ENCODE measurements at regions of chr14 and their contacts with region 1.

Region 1: DNA sequence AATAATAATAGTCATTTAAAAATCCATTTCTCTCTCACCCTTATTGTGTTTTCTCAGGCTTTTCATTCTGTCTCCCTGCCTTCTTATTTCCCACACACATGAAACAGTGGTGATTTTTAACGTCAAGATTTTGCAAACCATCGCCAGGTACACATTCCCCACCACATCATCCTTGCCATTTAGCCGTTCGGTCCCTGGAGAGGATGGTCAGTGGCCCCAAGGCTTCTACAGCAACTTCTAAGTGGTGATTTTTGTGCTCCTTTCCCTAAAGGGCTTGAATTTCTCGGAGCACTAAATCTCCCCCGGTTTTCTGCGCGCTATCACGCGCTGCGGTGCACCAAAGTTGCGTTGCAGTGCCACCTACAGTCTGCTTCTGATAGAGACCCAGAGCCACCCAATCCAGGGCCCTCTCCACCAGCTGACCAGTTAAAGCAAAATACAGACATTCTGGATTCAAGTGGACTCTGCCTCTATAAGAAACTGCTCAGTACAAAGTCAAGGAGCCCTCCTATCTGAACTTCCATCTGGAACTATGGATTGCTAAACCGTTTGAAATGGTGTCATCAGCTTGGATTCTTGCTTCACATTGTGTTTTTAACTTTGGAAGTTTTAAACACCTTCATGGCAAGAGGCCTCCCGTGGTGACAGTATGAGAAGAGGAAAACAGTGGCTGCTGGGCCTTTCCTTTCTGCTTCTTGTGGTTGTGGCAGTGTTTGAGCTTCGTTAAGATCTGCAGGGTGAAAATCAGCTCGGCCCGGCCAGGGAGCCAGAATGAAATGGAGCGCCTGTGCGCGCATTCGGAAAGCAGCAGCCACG is 234.0 kb downstream of the SPTSSA start:
- DNase-seq: peak; percentile 81
- ATAC-seq: peak; percentile 99
- H3K4me3 ChIP-seq: peak overlapping the region; percentile 52
- H3K27ac ChIP-seq: no peak overlapping the region
- H3K4me1 ChIP-seq: peaks cover 14% of the 10 kb centered on the region
- H3K27me3 ChIP-seq: no peaks in the 10 kb centered on the region
- CTCF ChIP-seq: peak; percentile 91

Region 2: DNA sequence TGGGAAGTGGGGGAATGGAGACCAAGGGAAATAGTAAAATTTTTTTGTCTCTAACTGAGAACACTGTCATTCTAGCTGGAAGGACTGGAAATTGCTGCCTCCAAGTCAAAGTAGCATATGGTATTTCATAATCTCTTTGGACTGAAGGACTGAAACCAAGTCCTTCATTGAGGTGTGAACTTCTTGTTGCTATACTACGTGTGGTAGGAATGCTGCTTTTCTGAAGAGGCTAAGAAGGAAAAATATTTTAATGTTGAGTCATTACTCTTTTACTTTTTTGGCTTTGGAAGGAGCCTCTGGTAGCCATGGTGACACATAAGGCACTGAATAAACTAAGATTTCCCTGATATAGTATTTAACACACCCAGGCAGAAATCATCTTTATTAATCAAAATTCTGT is 824.0 kb before region 1 on chr14:
- CTCF ChIA-PET with region 1: no interaction called
- POLR2A ChIA-PET with region 1: no interaction called
- intact Hi-C with region 1: no loop called
- DNase-seq: peak; percentile 91
- ATAC-seq: peak; percentile 90
- H3K4me3 ChIP-seq: no peak overlapping the region
- H3K27ac ChIP-seq: 0 out of 2 replicates have a peak overlapping the region, but pooled peaks have one; percentile 11
- H3K4me1 ChIP-seq: peaks cover 27% of the 10 kb centered on the region
- H3K27me3 ChIP-seq: no peaks in the 10 kb centered on the region
- CTCF ChIP-seq: peak; percentile 22; the same call in 1 of the 2 replicates

Region 3: GRCh38 chr14:34113005-34113511 is 115.0 kb before region 1 on chr14:
- CTCF ChIA-PET with region 1: no interaction called
- POLR2A ChIA-PET with region 1: no interaction called
- intact Hi-C with region 1: loop called (anchors 5 kb)
- DNase-seq: peak; percentile 91
- ATAC-seq: peak; percentile 82
- H3K4me3 ChIP-seq: peak overlapping the region; percentile 30
- H3K27ac ChIP-seq: peak overlapping the region; percentile 57
- H3K4me1 ChIP-seq: peaks cover 25% of the 10 kb centered on the region
- H3K27me3 ChIP-seq: no peaks in the 10 kb centered on the region
- CTCF ChIP-seq: no peak

Region 4: DNA sequence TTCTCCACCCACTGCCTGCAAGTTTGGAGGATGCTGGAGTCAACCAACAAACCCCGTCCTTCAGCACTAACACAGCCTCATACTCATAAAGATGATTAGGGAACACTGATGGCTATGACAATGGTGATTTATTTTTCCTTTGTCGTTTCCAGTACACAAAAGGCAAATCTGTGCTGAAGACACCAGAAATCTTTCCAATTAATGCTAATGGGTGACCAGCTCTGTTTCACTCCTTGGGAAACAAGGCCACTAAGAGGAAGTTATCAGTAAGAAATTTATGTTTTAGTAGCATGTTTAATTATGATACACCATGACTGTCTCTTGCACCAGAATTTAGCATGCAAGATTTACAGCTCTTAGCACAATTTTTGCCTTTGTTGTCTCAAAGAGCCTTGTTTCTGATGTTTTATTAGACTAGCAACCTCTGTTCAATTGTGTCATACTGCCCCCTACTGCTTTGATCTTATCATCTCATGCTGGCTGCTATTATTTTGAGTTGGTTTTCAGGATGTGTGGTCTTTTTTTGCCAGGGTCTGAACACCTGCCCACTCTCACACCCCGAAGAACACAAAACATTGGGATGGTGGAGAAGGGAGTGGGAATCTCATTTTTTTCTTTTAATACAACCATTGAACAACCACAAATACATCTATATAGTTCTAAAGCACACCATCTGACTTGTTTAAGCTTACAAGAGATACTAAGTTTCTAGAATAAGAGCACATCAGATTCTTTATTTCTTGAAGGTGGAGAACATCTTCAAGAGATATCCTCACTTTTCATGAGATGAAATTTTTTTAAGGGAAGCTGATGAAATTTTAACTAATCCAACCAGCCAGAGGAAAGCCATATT is 73.1 kb after region 1 on chr14:
- CTCF ChIA-PET with region 1: interaction called, 3 read pairs
- POLR2A ChIA-PET with region 1: no interaction called
- intact Hi-C with region 1: loop called (anchors 2 kb)
- DNase-seq: peak; percentile 78
- ATAC-seq: peak; percentile 74
- H3K4me3 ChIP-seq: no peak overlapping the region
- H3K27ac ChIP-seq: no peak overlapping the region
- H3K4me1 ChIP-seq: no peaks in the 10 kb centered on the region
- H3K27me3 ChIP-seq: no peaks in the 10 kb centered on the region
- CTCF ChIP-seq: peak; percentile 92

Measured in PC-3 (cell line).